ENCODE measurements at regions of chr11 and their contacts with region 1.

Region 1: GRCh38 chr11:17077520-17078401 is at the start of gene RPS13:
- DNase-seq: peak; percentile 99
- ATAC-seq: peak; percentile 98
- H3K4me3 ChIP-seq: peak within 1 kb of the TSS; percentile 72
- H3K27ac ChIP-seq: peak within 1 kb of the TSS; percentile 83
- H3K4me1 ChIP-seq: peaks cover 4% of the 10 kb centered on the region; the same call in 1 of the 2 replicates
- H3K27me3 ChIP-seq: no peaks in the 10 kb centered on the region
- CTCF ChIP-seq: no peak
- POLR2A ChIP-seq: peak; percentile 96
- RAD21 ChIP-seq: no peak
- total RNA-seq, gene RPS13: 548 and 1,189 TPM in 2 replicates

Region 2: GRCh38 chr11:17129003-17129402 is 51.2 kb after region 1 on chr11:
- CTCF ChIA-PET with region 1: no interaction called
- POLR2A ChIA-PET with region 1: interaction called, 16 read pairs
- dilution Hi-C with region 1: no loop called
- in situ Hi-C with region 1: no loop called
- intact Hi-C with region 1: no loop called
- DNase-seq: peak; percentile 60
- ATAC-seq: peak; percentile 29; the same call in 1 of the 2 replicates
- H3K4me3 ChIP-seq: no peak overlapping the region
- H3K27ac ChIP-seq: no peak overlapping the region
- H3K4me1 ChIP-seq: no peaks in the 10 kb centered on the region
- H3K27me3 ChIP-seq: no peaks in the 10 kb centered on the region
- CTCF ChIP-seq: no peak
- POLR2A ChIP-seq: no peak
- RAD21 ChIP-seq: no peak